MCF 10A (cell line): ENCODE measurements at regions of chr1 and their contacts with region 1.

Region 1: GRCh38 chr1:179867807-179868330 is 9.7 kb downstream of the TOR1AIP2 start:
- DNase-seq: peak; percentile 79
- H3K4me3 Mint-ChIP-seq: no peak overlapping the region
- H3K27ac Mint-ChIP-seq: no peak overlapping the region
- H3K4me1 Mint-ChIP-seq: peaks cover 34% of the 10 kb centered on the region
- H3K27me3 Mint-ChIP-seq: no peaks in the 10 kb centered on the region
- CTCF ChIP-seq: peak; percentile 81

Region 2: DNA sequence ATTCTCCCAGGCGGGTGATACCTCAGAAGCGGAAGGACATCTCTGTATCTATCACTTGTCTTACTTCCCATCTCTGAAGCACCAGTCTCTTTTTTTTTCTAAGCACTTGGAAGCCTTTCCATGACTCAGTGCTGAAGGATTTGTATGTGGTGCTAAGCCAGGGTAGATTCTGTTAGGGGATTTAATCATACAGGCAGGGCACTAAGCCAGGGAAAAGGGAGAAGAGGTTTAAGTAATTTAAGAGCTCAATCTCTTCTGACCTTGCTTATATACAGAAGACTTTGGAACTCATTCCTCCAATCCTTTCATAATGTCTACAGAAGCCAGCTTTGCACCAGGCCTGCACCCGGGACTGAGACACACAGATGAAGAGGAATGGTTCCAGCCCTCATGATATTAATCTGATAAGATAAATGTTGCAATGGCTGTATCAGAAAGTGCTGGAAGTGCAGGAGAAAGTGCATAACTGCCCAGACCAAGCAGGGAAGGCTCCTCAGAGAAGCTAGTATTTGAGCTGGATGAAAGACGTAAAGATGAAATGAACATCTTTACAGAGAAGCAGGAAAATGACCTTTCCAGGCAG is 113.7 kb before region 1 on chr1:
- CTCF ChIA-PET with region 1: no interaction called
- POLR2A ChIA-PET with region 1: no interaction called
- intact Hi-C with region 1: no loop called
- DNase-seq: peak; percentile 69
- H3K4me3 Mint-ChIP-seq: no peak overlapping the region
- H3K27ac Mint-ChIP-seq: no peak overlapping the region
- H3K4me1 Mint-ChIP-seq: no peaks in the 10 kb centered on the region
- H3K27me3 Mint-ChIP-seq: peaks cover 16% of the 10 kb centered on the region
- CTCF ChIP-seq: no peak

Region 3: GRCh38 chr1:179856296-179856695 is 11.6 kb before region 1 on chr1:
- CTCF ChIA-PET with region 1: interaction called, 18 read pairs
- POLR2A ChIA-PET with region 1: interaction called, 9 read pairs
- intact Hi-C with region 1: no loop called
- DNase-seq: no peak
- H3K4me3 Mint-ChIP-seq: no peak overlapping the region
- H3K27ac Mint-ChIP-seq: no peak overlapping the region
- H3K4me1 Mint-ChIP-seq: peaks cover 14% of the 10 kb centered on the region
- H3K27me3 Mint-ChIP-seq: no peaks in the 10 kb centered on the region
- CTCF ChIP-seq: no peak

Region 4: GRCh38 chr1:180168786-180169639 is 301.1 kb after region 1 on chr1:
- CTCF ChIA-PET with region 1: interaction called, 3 read pairs
- POLR2A ChIA-PET with region 1: no interaction called
- intact Hi-C with region 1: loop called (anchors 1 kb)
- DNase-seq: peak; percentile 69
- H3K4me3 Mint-ChIP-seq: no peak overlapping the region
- H3K27ac Mint-ChIP-seq: peak overlapping the region; percentile 77
- H3K4me1 Mint-ChIP-seq: peaks cover 29% of the 10 kb centered on the region
- H3K27me3 Mint-ChIP-seq: no peaks in the 10 kb centered on the region
- CTCF ChIP-seq: peak; percentile 47

Region 5: GRCh38 chr1:180415985-180416633 is 548.2 kb after region 1 on chr1:
- CTCF ChIA-PET with region 1: no interaction called
- POLR2A ChIA-PET with region 1: no interaction called
- intact Hi-C with region 1: no loop called
- DNase-seq: peak; percentile 49
- H3K4me3 Mint-ChIP-seq: no peak overlapping the region
- H3K27ac Mint-ChIP-seq: no peak overlapping the region
- H3K4me1 Mint-ChIP-seq: no peaks in the 10 kb centered on the region
- H3K27me3 Mint-ChIP-seq: no peaks in the 10 kb centered on the region
- CTCF ChIP-seq: peak; percentile 65